CD8-positive, alpha-beta memory T cell (primary cell): ENCODE measurements at regions of chr5 and their contacts with region 1.

Region 1: GRCh38 chr5:181184857-181185251 is 20.1 kb downstream of the TRIM7 start:
- DNase-seq: no peak
- H3K4me3 ChIP-seq: no peak overlapping the region
- H3K4me3 Mint-ChIP-seq: peak overlapping the region; percentile 85 to 95 (median 91)
- H3K27ac ChIP-seq: peak overlapping the region; percentile 59
- H3K27ac Mint-ChIP-seq: peak overlapping the region in 6 of 8 donors; percentile 15 to 97 (median 90)
- H3K4me1 ChIP-seq: peaks cover 4% of the 10 kb centered on the region
- H3K4me1 Mint-ChIP-seq: peaks cover 43 to 58% (median 54%) of the 10 kb centered on the region in 3 donors
- H3K27me3 ChIP-seq: no peaks in the 10 kb centered on the region
- H3K27me3 Mint-ChIP-seq: peaks cover 0 to 26% of the 10 kb centered on the region in 2 donors

Region 2: GRCh38 chr5:181173420-181174342 is 11.2 kb before region 1 on chr5:
- CTCF ChIA-PET with region 1: interaction called, 13 read pairs
- POLR2A ChIA-PET with region 1: interaction called, 10 read pairs
- DNase-seq: peak in 4 of 5 donors; percentile 33 to 71 (median 51)
- H3K4me3 ChIP-seq: peak overlapping the region; percentile 32
- H3K4me3 Mint-ChIP-seq: peak overlapping the region; percentile 56 to 91 (median 84)
- H3K27ac ChIP-seq: no peak overlapping the region
- H3K27ac Mint-ChIP-seq: peak overlapping the region; percentile 38 to 90 (median 80)
- H3K4me1 ChIP-seq: peaks cover 18% of the 10 kb centered on the region
- H3K4me1 Mint-ChIP-seq: peaks cover 17 to 35% (median 31%) of the 10 kb centered on the region in 3 donors
- H3K27me3 ChIP-seq: peaks cover 19% of the 10 kb centered on the region
- H3K27me3 Mint-ChIP-seq: peaks cover 48 to 62% of the 10 kb centered on the region in 2 donors